Activated CD8-positive, alpha-beta T cell treated with anti-CD3 and anti-CD28 coated beads, Interleukin-2, amount 10 ng/mL, durations not matched to agents 7 days and 5 days (primary cell): ENCODE measurements at regions of chr15 and their contacts with region 1.

Region 1: DNA sequence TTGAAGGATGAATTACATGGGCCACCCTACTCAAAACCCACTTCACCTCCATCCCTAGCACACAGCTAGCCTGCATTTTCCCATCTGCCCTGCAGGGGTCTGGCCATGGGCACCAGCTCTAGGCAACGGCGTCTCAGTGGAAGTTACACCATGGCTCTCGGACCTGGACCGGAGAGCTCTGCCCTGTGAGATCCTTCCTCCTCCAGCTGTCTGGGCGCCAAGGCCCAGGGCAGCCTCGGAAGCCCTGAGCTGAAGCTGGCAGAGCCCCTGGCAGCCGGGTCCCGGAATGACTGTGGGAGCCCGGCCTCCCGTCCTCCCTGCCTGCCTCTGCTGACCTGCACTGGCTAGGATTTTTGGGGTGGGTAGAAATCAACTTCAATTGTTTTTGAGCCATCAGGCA is 98.9 kb downstream of the CHSY1 start:
- DNase-seq: no peak
- ATAC-seq: no peak
- H3K4me3 Mint-ChIP-seq: no peak overlapping the region
- H3K27ac Mint-ChIP-seq: no peak overlapping the region
- H3K4me1 Mint-ChIP-seq: peaks cover 40% of the 10 kb centered on the region
- H3K27me3 Mint-ChIP-seq: no peaks in the 10 kb centered on the region

Region 2: DNA sequence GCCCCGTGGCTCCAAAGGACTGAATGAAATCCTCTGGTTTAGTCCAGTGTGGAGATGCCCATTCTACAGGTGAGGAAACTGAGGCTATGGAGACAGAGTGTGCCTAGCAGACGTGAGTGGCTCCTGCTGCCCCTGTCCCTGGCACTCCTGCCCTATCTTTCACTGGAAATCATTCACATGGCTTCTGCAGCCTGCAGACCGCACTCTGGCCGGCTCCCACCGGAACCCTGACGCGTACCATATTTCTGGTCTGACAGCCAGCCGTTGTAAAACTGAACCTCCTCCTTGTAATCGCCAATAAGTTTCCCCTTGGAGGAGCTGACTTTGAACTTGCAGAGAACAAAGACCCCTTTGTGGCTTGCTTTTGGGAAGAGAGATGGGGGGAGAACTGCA is 37.5 kb before region 1 on chr15:
- CTCF ChIA-PET with region 1: no interaction called
- POLR2A ChIA-PET with region 1: no interaction called
- DNase-seq: no peak
- ATAC-seq: no peak
- H3K4me3 Mint-ChIP-seq: no peak overlapping the region
- H3K27ac Mint-ChIP-seq: no peak overlapping the region
- H3K4me1 Mint-ChIP-seq: peaks cover 17% of the 10 kb centered on the region
- H3K27me3 Mint-ChIP-seq: no peaks in the 10 kb centered on the region

Region 3: DNA sequence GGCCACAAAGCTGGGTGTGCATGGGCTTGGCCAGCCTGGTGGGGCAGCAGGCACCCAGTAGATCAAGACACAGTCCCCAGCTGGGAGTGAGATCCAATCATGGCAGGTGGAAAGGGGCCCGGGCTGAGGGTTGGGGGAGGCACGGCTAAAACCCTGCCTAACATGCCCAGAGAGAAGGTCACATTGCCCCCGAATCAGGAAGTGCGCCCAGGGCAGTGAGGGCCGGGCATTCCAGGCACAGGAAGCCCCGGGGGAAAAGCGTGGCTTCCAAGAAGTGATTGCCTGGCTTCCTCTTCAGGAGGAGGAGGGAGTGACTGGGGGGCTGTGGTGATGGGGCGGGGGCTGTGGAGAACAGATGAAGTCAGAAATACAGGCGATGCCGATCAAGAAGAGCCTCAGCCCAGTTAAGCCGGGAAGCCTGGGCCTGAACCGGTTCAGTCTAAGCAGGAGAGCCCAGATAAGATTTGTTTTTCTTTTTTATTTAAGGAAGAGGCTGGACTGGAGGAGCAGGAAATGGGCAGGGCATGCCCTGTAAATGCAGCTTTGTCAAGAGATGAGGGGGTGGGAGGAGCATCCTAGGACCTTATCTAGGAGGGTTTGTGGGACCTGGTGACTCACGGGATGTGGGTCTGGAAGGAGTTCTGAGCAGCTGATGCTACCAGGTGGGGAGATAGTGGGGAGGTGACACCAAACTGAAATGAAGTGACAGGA is 15.0 kb after region 1 on chr15:
- CTCF ChIA-PET with region 1: interaction called, 13 read pairs
- POLR2A ChIA-PET with region 1: interaction called, 3 read pairs
- DNase-seq: peak; percentile 92
- ATAC-seq: peak; percentile 96
- H3K4me3 Mint-ChIP-seq: peak overlapping the region; percentile 69
- H3K27ac Mint-ChIP-seq: peak overlapping the region; percentile 95
- H3K4me1 Mint-ChIP-seq: peaks cover 48% of the 10 kb centered on the region
- H3K27me3 Mint-ChIP-seq: no peaks in the 10 kb centered on the region